ENCODE measurements at regions of chr18 and their contacts with region 1.

Region 1: DNA sequence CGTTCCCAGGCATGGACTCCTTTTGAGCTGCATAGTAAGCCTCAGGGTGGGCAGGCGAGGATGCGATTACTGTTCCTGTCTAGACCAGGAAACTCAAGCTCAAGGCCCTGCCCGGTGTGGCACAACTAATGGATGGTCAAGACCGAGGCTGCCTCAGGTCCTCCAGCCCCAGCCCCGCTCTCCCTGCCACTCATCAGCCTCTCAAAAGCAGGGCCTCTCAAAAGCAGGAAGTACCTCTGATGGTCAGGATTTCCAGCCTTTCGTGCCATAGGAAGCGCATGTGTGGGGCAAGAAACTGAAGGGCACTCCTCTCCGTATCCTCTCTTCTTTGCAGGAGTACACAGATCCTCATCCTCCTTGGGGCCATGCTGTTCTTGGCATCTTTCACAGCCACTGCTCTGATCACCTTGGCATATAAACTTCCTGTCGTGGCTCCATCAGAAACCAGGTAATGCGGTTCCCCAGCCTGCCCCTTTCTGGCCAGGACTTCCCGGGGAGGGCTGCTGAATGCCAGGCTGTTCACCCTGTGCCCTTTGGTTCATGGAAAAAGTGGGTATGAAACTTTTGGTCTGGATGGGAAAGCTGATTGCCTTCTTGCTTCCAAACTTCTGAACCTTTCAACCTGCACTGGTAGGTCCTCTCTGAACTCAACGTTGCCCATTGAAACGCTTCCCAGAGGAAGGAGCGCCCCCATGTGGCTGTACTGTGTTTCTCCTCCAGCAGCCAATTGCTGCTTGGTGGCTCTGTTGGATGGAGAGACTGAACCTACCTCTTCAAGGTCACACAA is 82.8 kb upstream of the SEC11C start:
- DNase-seq: peak; percentile 63 to 83 (median 79)
- H3K4me3 ChIP-seq: no peak overlapping the region
- H3K27ac ChIP-seq: no peak overlapping the region
- H3K4me1 ChIP-seq: no peaks in the 10 kb centered on the region
- H3K27me3 ChIP-seq: no peaks in the 10 kb centered on the region
- CTCF ChIP-seq: peak; percentile 59 to 64 (median 62)
- EP300 ChIP-seq: no peak
- POLR2A ChIP-seq: no peak

Region 2: DNA sequence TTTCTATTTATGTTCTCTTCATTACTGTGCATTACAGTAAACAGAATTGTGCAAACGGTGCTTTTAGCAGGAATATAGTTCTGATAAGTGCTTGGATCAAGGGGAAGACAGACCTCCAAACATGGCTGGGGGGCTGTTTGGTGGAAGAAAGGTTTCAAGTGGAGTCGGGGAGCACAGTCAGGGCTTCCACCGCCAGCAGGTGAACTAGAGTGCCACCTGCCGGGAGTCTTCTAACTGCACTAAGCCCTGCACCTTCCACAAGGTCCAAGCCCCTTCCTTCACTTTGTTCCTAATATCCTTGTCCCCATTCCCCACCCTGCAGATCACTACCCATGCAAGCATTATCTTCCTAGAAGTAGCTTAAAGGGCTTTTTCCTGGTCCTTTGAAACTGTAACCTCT is 1610.6 kb before region 1 on chr18:
- intact Hi-C with region 1: no loop called
- DNase-seq: no peak
- H3K4me3 ChIP-seq: no peak overlapping the region
- H3K27ac ChIP-seq: no peak overlapping the region
- H3K4me1 ChIP-seq: no peaks in the 10 kb centered on the region
- H3K27me3 ChIP-seq: no peaks in the 10 kb centered on the region
- CTCF ChIP-seq: no peak
- EP300 ChIP-seq: no peak
- POLR2A ChIP-seq: no peak

Region 3: GRCh38 chr18:58863539-58864145 is 193.3 kb before region 1 on chr18:
- intact Hi-C with region 1: no loop called
- DNase-seq: peak; percentile 51 to 76 (median 70)
- H3K4me3 ChIP-seq: peak overlapping the region; percentile 42
- H3K27ac ChIP-seq: peak overlapping the region; percentile 99
- H3K4me1 ChIP-seq: peaks cover 28% of the 10 kb centered on the region
- H3K27me3 ChIP-seq: no peaks in the 10 kb centered on the region
- CTCF ChIP-seq: no peak
- EP300 ChIP-seq: no peak
- POLR2A ChIP-seq: no peak

Region 4: GRCh38 chr18:58998401-58999203 is 58.3 kb before region 1 on chr18:
- intact Hi-C with region 1: loop called in 1 of 4 experiments (anchors 10 kb)
- DNase-seq: peak; percentile 60 to 84 (median 72)
- H3K4me3 ChIP-seq: no peak overlapping the region
- H3K27ac ChIP-seq: no peak overlapping the region
- H3K4me1 ChIP-seq: peaks cover 10% of the 10 kb centered on the region
- H3K27me3 ChIP-seq: no peaks in the 10 kb centered on the region
- CTCF ChIP-seq: no peak
- EP300 ChIP-seq: no peak
- POLR2A ChIP-seq: no peak